ENCODE measurements at regions of chr6 and their contacts with region 1.

Region 1: GRCh38 chr6:25278914-25279747 is at the start of gene CARMIL1:
- DNase-seq: peak; percentile 88 to 93
- ATAC-seq: peak; percentile 92
- H3K4me3 ChIP-seq: peak within 1 kb of the TSS; percentile 81 to 92
- H3K27ac ChIP-seq: peak within 1 kb of the TSS; percentile 16 to 52
- H3K4me1 ChIP-seq: no peaks in the 10 kb centered on the region
- H3K27me3 ChIP-seq: no peaks in the 10 kb centered on the region
- total RNA-seq, gene CARMIL1: 32.2 to 33.9 TPM

Region 2: DNA sequence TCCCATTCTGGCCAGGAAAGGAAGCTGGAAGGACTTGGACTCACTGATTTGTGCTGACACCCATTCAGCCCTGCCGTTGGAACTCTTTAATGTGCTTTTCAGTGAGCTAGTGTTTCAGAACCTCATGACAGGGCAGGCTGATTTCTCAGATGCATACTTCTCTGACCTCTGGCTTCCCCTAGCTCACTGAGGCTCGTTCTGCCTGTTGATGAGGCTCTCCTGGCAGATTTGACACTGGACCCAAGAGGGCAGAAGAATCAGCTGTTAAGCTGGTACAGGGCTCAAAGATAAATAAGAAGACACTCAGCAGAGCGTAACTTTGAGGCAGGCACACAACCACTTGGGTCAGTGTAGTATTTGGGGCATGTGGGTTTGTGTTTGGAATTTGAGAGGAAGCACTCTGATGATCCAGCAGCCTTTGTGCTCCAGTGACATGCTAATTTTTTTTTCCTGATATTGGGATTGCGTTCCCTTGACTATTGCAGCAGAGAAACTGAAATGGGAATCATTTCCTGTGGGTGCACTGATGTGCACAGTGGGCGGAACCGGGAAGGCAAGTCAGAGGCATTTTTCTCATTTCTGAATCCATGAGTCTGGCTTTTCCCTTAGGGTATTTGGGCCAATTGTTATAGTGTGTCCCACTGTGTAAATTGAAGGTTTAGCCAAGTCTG is 80.2 kb after region 1 on chr6:
- intact Hi-C with region 1: loop called (anchors 5 kb)
- DNase-seq: peak; percentile 63 to 79
- ATAC-seq: peak; percentile 78
- H3K4me3 ChIP-seq: no peak overlapping the region
- H3K27ac ChIP-seq: peak overlapping the region; percentile 78 to 93
- H3K4me1 ChIP-seq: peaks cover 3 to 15% of the 10 kb centered on the region in 2 donors
- H3K27me3 ChIP-seq: no peaks in the 10 kb centered on the region

Region 3: DNA sequence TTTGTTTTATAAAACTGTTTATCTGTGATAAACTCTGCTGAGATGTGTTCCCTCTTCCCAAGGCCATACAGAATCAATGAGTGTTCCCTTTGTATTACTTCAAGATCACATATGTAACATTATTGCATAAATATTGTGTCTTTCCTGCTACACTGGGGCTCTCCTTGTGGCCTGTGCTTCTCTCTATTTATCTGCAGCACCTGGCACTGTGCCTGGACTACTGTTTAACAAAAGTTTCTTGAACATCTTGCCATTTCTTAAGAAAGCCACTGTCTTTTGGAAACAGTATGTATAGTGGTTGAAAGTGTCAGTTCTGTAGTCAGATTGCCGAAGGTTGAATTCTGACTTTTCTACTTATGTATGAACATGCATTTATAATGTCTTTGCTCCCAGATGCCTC is 203.9 kb after region 1 on chr6:
- intact Hi-C with region 1: loop called (anchors 2 to 5 kb)
- DNase-seq: no peak
- ATAC-seq: no peak
- H3K4me3 ChIP-seq: no peak overlapping the region
- H3K27ac ChIP-seq: no peak overlapping the region
- H3K4me1 ChIP-seq: peaks cover 0 to 2% of the 10 kb centered on the region in 2 donors
- H3K27me3 ChIP-seq: no peaks in the 10 kb centered on the region

Region 4: DNA sequence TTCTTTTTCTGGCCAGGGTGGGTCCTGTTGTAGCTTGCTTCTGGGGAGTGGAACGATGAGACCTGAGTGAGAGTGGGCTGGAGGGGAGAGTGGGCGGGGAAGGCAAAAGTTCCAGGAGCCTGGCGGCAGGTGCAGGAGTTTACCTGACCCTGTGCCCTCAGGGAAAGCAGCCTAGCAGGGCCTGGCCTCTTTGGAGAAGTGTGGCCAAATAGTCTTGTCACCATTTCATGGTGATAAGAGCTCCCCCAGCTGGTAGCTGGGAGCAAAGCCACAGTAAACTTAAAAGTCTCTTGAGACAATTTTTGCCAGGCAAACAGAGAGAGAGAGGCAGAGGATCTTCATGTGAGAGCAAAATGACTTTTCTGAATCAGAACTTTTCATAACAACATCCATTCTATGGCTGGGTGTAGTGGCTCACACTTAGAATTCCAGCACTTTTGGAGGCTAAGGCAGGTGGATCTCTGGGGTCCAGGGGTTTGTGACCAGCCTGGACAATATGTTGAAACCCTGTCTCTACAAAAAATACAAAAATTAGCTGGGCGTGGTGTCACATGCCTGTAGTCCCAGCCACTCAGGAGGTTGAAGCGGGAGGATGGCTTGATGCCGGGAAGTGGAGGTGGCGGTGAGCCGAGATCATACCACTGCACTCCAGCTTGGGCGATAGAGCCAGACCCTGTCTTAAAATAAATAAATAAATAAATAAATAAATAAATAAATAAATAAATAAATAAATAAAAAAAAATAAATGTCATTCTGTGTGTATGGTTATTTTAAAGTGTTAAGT is 211.1 kb after region 1 on chr6:
- intact Hi-C with region 1: loop called (anchors 2 to 5 kb)
- DNase-seq: peak; percentile 82 to 83
- ATAC-seq: peak; percentile 87
- H3K4me3 ChIP-seq: no peak overlapping the region
- H3K27ac ChIP-seq: no peak overlapping the region
- H3K4me1 ChIP-seq: peaks cover 0 to 2% of the 10 kb centered on the region in 2 donors
- H3K27me3 ChIP-seq: no peaks in the 10 kb centered on the region

Region 5: GRCh38 chr6:25556516-25556915 is 277.4 kb after region 1 on chr6:
- intact Hi-C with region 1: loop called in 1 of 2 experiments (anchors 5 kb)
- DNase-seq: peak; percentile 83 to 91
- ATAC-seq: peak; percentile 74
- H3K4me3 ChIP-seq: no peak overlapping the region
- H3K27ac ChIP-seq: no peak overlapping the region
- H3K4me1 ChIP-seq: no peaks in the 10 kb centered on the region
- H3K27me3 ChIP-seq: no peaks in the 10 kb centered on the region